Activated naive CD4-positive, alpha-beta T cell treated with anti-CD3 and anti-CD28 coated beads, Interleukin-2, amount 10 ng/mL, durations not matched to agents 7 days and 5 days (primary cell): ENCODE measurements at regions of chr13 and their contacts with region 1.

Region 1: GRCh38 chr13:50911937-50912795 is 2.6 kb downstream of the RNASEH2B start:
- DNase-seq: peak; percentile 97
- H3K4me3 Mint-ChIP-seq: peak overlapping the region; percentile 98
- H3K27ac Mint-ChIP-seq: peak overlapping the region; percentile 99
- H3K4me1 Mint-ChIP-seq: peaks cover 72% of the 10 kb centered on the region
- H3K27me3 Mint-ChIP-seq: no peaks in the 10 kb centered on the region

Region 2: DNA sequence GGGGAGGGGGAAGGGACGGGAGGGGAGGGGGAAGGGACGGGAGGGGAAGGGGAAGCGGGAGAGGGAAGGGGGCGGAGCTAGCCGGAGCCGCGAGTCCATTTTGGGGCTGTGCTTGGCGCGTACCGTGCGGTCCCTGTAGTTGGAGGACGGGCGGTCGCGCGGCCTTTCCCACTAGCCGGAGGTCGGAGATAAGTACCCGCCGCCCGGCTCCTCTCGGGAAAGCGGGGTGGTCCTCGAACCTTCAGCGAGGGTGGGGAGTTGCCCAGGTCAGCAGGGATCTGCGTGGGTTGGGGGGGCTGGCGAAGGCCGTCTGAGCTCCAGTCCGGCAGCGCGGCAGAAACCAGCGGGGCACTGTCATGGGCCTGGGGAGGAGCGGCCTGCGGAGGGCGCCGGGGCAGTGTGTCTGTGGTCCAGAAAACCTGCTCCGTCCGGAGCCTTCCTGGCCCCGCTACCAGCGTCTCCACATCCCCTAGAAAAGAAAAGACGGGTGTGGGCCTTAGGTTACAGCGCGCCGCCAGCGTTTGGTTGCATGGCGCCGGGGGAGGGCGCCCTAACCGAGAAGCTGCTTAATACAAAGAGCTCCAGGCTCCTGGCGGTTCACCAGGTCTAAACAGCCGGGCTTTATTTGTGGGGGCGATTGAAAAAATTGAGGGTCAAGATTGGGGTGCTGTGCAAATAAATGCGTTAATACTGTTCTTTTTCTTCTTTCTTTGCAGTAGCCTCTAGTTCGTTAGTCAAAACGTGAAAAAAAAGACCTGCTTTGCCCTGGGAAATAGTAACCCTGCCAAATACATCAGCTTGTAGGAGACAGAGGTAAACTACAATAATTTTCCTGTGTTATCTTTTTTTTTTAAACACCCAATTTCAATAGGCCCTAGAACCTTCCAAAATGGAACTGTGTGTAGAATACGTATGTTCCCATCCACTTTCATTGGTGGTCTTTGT is 914.9 kb before region 1 on chr13 and contains the start of gene TRIM13:
- CTCF ChIA-PET with region 1: interaction called, 10 read pairs
- DNase-seq: peak; percentile 90
- H3K4me3 Mint-ChIP-seq: peak within 1 kb of the TSS; percentile 90
- H3K27ac Mint-ChIP-seq: peak within 1 kb of the TSS; percentile 91
- H3K4me1 Mint-ChIP-seq: peaks cover 42% of the 10 kb centered on the region
- H3K27me3 Mint-ChIP-seq: no peaks in the 10 kb centered on the region

Region 3: GRCh38 chr13:50074843-50075242 is 837.3 kb before region 1 on chr13:
- CTCF ChIA-PET with region 1: no interaction called
- DNase-seq: no peak
- H3K4me3 Mint-ChIP-seq: no peak overlapping the region
- H3K27ac Mint-ChIP-seq: no peak overlapping the region
- H3K4me1 Mint-ChIP-seq: peaks cover 64% of the 10 kb centered on the region
- H3K27me3 Mint-ChIP-seq: no peaks in the 10 kb centered on the region

Region 4: DNA sequence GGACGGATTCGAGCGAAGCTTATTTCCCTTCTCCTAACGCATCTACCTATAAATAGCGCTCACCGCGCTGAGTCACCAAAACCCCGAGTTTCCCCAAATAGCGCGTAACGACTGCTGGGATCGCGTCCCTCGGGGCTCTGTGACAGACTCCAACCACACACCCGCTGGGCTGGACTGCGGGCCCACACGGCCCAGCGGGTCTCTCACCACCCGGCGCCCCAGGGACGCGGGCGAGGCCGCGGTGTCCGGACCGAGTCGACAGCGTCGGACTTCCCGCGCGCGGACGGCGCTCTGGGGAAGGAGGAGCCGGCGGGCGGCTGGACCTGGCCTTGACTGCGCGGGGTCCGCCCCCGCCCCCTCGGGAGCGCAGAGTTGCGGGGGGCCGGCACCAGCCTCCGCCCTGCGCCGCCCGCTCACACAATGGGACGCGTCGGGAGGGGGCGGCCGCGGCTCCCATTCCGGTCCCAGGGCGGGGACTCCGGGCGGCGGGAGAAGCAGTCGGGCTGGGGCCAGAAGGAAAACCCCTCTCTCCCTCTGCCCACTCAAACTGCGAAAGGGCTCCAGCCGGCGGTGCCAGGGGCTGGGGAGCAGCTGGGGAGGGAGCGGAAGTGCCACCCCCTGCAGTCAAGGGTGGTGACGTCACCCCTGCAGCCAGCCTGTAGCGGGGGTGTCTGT is 788.2 kb before region 1 on chr13:
- CTCF ChIA-PET with region 1: interaction called, 17 read pairs
- DNase-seq: peak; percentile 79
- H3K4me3 Mint-ChIP-seq: peak overlapping the region; percentile 87
- H3K27ac Mint-ChIP-seq: peak overlapping the region; percentile 98
- H3K4me1 Mint-ChIP-seq: peaks cover 52% of the 10 kb centered on the region
- H3K27me3 Mint-ChIP-seq: peaks cover 18% of the 10 kb centered on the region

Region 5: GRCh38 chr13:50855681-50856080 is 56.5 kb before region 1 on chr13:
- CTCF ChIA-PET with region 1: no interaction called
- DNase-seq: no peak
- H3K4me3 Mint-ChIP-seq: no peak overlapping the region
- H3K27ac Mint-ChIP-seq: no peak overlapping the region
- H3K4me1 Mint-ChIP-seq: no peaks in the 10 kb centered on the region
- H3K27me3 Mint-ChIP-seq: peaks cover 46% of the 10 kb centered on the region

Region 6: GRCh38 chr13:50893211-50893852 is 18.8 kb before region 1 on chr13:
- CTCF ChIA-PET with region 1: interaction called, 84 read pairs
- DNase-seq: peak; percentile 49
- H3K4me3 Mint-ChIP-seq: peak overlapping the region; percentile 55
- H3K27ac Mint-ChIP-seq: peak overlapping the region; percentile 98
- H3K4me1 Mint-ChIP-seq: peaks cover 53% of the 10 kb centered on the region
- H3K27me3 Mint-ChIP-seq: no peaks in the 10 kb centered on the region